H1 (cell line): ENCODE measurements at regions of chr20 and their contacts with region 1.

Region 1: DNA sequence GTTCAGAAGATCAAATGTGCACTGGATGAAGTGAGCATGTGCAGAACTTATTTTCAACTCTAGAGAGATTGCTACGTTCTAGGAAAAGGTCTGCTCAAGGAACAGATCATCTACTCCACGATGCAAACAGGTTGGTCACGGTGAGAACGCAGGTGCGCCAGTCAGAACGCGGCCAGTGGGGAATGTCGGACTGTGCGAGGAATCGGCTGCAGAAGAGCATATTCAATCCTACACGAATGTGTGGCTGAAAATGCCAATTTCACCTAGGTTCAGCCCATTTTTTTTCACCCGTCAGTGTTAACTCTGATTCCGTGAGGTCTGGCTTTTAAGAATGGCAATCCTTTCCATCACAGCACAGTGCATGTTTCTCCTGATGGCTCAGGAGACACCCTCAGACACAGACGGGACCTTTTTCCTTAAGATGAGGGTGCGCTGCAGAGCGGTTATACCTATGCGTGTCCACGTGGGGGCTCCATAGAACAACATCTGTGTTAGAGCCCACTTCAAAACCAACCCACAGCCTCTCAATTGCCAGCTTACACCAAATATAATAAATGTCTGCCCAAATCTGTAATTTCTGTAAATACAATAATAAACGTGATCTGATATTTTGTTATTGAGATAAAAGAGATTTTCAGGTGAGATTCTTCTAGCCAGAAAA is 250.4 kb downstream of the FOXA2 start:
- DNase-seq: peak in 1 of 2 experiments; percentile 69
- H3K4me3 ChIP-seq: no peak overlapping the region
- H3K27ac ChIP-seq: no peak overlapping the region
- H3K4me1 ChIP-seq: no peaks in the 10 kb centered on the region
- H3K27me3 ChIP-seq: peaks cover 0 to 3% (median 0%) of the 10 kb centered on the region in 4 experiments; a peak in 2 of 7 replicates
- CTCF ChIP-seq: peak; percentile 68 to 74 (median 71)
- EP300 ChIP-seq: no peak
- POLR2A ChIP-seq: no peak
- RAD21 ChIP-seq: peak; percentile 83 to 84

Region 2: DNA sequence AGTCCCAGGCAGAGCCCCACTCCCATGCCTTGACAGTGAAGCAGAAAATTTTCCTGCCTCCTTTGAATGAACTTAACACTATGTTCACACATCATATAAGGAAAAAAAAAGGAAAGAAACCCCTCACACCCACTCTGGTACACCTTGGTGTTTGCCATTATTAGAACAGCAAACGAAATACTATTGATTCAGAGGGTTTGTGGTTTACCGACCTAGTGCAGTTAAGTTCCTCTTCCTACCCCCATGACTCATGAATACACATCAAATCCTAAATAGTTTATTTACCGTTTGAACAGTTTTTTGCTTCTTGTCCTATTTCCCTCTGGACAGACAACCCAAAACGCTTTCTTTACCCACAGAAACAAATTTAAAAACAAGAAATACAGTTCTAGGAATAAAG is 12.7 kb after region 1 on chr20:
- CTCF ChIA-PET with region 1: interaction called, 54 read pairs
- POLR2A ChIA-PET with region 1: no interaction called
- DNase-seq: no peak
- H3K4me3 ChIP-seq: no peak overlapping the region
- H3K27ac ChIP-seq: no peak overlapping the region
- H3K4me1 ChIP-seq: no peaks in the 10 kb centered on the region
- H3K27me3 ChIP-seq: no peaks in the 10 kb centered on the region; a peak in 2 of 7 replicates
- CTCF ChIP-seq: no peak
- EP300 ChIP-seq: no peak
- POLR2A ChIP-seq: no peak
- RAD21 ChIP-seq: no peak

Region 3: DNA sequence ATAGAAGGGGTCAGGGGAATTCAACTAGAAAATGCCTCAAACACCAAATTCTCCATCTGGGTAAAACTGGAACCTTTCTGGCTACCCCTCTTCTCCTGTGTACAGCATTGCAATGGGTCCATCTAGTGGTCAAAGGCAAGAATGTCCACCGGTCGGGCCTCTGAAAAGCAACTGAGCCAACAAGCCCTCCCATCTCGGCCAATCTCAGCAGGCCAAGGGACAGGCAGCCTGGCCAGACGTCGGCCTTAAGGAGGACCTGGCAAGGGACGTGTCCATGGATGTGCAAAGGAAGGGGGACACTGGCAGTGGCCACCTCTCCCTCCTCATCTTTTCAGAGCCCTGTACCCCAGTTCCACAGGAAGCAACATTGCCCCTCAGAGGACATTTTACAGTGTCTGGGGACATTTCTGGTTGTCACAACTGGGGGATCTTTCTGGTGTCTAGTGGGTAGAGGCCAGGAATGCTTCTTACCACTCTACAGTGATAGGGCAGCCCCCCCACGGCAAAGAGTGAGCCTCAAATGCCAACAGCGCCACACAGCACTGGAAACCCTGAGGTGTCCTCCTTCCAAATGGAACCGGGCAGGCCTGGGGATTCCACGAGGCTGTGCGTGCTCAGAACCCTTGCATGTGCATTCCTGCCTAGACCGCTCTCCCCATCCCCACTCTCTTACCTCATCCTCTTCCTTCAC is 350.2 kb after region 1 on chr20:
- CTCF ChIA-PET with region 1: interaction called, 140 read pairs
- POLR2A ChIA-PET with region 1: interaction called, 4 read pairs
- DNase-seq: peak; percentile 47 to 83
- H3K4me3 ChIP-seq: no peak overlapping the region
- H3K27ac ChIP-seq: no peak overlapping the region
- H3K4me1 ChIP-seq: no peaks in the 10 kb centered on the region
- H3K27me3 ChIP-seq: no peaks in the 10 kb centered on the region; a peak in 3 of 7 replicates
- CTCF ChIP-seq: peak; percentile 69 to 93 (median 91)
- EP300 ChIP-seq: no peak
- POLR2A ChIP-seq: no peak
- RAD21 ChIP-seq: peak; percentile 99